ENCODE measurements at regions of chr17 and their contacts with region 1.

Region 1: GRCh38 chr17:35612924-35613521 is 25.9 kb downstream of the AP2B1 start:
- DNase-seq: peak; percentile 14

Region 2: GRCh38 chr17:35587074-35587971 is 25.7 kb before region 1 on chr17 and contains the start of gene AP2B1:
- CTCF ChIA-PET with region 1: interaction called, 11 read pairs
- POLR2A ChIA-PET with region 1: interaction called, 4 read pairs
- DNase-seq: peak; percentile 74

Region 3: GRCh38 chr17:35747540-35748017 is 134.6 kb after region 1 on chr17:
- CTCF ChIA-PET with region 1: interaction called, 50 read pairs
- POLR2A ChIA-PET with region 1: interaction called, 4 read pairs
- DNase-seq: peak; percentile 72

Measured in HEK293T (cell line).